K562 (cell line): ENCODE measurements at regions of chr12 and their contacts with region 1.

Region 1: DNA sequence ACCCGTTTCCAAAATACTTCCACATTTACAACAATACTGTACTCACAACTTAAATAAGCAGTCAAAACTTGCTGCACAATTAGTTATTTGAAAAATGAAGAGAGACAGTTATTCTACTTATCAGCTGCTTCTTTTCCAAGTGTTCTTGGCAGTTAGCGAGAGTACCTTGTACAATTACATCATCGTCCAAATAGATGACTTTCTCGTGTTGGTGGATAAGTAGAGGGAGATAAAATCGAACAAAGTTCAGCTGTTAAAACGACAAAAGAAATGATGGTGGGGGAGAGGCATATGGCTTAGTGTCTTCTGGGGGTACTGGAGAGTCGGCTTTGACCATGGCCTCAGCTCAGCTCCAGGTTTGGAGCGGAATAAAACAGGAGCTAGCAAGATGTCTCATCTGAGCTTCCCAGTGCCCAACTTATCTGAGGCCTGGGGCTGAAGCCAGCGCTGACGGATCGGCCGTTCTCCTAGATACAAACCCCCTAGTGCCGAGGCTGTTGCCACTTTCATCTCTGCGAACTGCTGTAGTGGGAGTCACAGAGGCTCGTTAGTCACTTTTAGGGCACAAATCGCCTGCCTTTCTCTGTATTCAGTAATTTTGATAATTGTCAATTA is 31.7 kb downstream of the TDG start:
- DNase-seq: peak in 2 of 4 experiments; percentile 24 to 40
- ATAC-seq: peak; percentile 79
- H3K4me3 ChIP-seq: no peak overlapping the region
- H3K27ac ChIP-seq: no peak overlapping the region
- H3K4me1 ChIP-seq: peaks cover 6 to 14% of the 10 kb centered on the region in 2 experiments; a peak in 4 of 5 replicates
- H3K27me3 ChIP-seq: no peaks in the 10 kb centered on the region; a peak in 1 of 5 replicates
- CTCF ChIP-seq: no peak
- EP300 ChIP-seq: no peak
- POLR2A ChIP-seq: no peak
- RAD21 ChIP-seq: no peak

Region 2: GRCh38 chr12:103965590-103966504 is 31.5 kb before region 1 on chr12 and contains the start of gene TDG:
- CTCF ChIA-PET with region 1: no interaction called
- POLR2A ChIA-PET with region 1: interaction called, 11 read pairs
- in situ Hi-C with region 1: no loop called
- intact Hi-C with region 1: no loop called
- DNase-seq: peak; percentile 92 to 99 (median 94)
- ATAC-seq: peak; percentile 94
- H3K4me3 ChIP-seq: peak within 1 kb of the TSS; percentile 69
- H3K27ac ChIP-seq: peak within 1 kb of the TSS; percentile 85
- H3K4me1 ChIP-seq: peaks cover 4 to 25% of the 10 kb centered on the region in 2 experiments; a peak in 4 of 5 replicates
- H3K27me3 ChIP-seq: no peaks in the 10 kb centered on the region
- CTCF ChIP-seq: 0 out of 6 replicates have a peak, but pooled peaks of 1 of the 3 experiments have one; percentile 13
- EP300 ChIP-seq: no peak; the same call in 1 of the 2 replicates
- POLR2A ChIP-seq: peak; percentile 96
- RAD21 ChIP-seq: peak in 1 of 2 experiments; percentile 15; a peak in 1 of 4 replicates
- polyA plus RNA-seq, gene TDG: 37.6 to 49.0 TPM